Ascending aorta (tissue), 2 donors: ENCODE measurements at regions of chr9 and their contacts with region 1.

Region 1: DNA sequence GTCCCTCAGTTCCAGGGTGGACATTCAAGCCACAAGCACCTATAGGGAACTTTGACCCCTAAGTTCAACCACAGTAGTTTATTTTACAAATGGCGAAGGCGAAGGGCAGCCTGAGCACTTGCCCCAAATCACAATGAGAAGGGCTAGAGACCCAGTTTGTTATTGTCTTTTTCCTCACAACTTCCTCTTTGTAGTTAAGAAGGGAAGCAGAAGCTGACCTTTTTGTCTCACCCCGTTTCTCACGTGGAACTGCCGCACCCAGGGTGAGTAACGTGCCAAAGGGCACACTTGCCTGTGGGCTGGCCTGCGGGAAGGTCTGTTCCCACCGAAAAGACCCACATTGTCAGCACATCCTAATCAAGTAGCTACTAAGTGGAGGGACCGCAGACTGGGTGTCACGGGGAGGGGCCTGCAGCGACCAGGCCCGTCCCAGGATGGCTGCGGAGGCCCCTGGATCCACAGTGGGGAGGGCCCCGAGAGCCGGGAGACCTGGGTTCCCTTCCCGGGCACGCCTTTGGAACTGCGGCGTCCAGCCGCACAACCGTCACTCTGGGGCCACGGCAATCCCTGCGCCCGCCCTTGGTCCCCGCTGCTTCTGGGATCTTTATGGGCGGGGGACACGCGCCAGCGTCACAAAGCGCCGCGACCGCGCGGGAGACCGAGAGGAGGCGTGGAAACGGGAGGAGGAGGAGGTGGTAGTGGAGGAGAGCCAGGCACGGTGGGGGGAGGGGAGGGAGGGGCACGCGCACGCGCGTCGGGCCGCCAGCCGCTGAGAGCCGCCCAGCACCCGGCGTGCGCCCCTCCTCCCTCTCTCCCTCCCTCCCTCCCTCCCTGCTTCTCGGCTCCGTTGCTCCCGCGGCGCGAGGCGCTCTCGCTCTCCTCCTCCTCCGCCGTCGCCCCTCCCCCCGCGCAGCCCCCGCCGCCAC is at the start of gene UBE2R2:
- DNase-seq: peak; percentile 68 to 95
- H3K4me3 ChIP-seq: peak within 1 kb of the TSS; percentile 85 to 95
- H3K27ac ChIP-seq: peak within 1 kb of the TSS; percentile 99 to 100
- H3K4me1 ChIP-seq: peaks cover 0 to 25% of the 10 kb centered on the region in 2 donors
- H3K27me3 ChIP-seq: no peaks in the 10 kb centered on the region
- CTCF ChIP-seq: no peak
- total RNA-seq, gene UBE2R2: 7.2 TPM

Region 2: GRCh38 chr9:33290247-33291030 is 526.2 kb before region 1 on chr9 and contains the start of gene NFX1:
- intact Hi-C with region 1: loop called (anchors 10 kb)
- DNase-seq: peak; percentile 97 to 99
- H3K4me3 ChIP-seq: peak within 1 kb of the TSS; percentile 83 to 95
- H3K27ac ChIP-seq: peak within 1 kb of the TSS; percentile 99
- H3K4me1 ChIP-seq: peaks cover 5 to 26% of the 10 kb centered on the region in 2 donors
- H3K27me3 ChIP-seq: no peaks in the 10 kb centered on the region
- CTCF ChIP-seq: no peak
- total RNA-seq, gene NFX1: 14.2 TPM

Region 3: DNA sequence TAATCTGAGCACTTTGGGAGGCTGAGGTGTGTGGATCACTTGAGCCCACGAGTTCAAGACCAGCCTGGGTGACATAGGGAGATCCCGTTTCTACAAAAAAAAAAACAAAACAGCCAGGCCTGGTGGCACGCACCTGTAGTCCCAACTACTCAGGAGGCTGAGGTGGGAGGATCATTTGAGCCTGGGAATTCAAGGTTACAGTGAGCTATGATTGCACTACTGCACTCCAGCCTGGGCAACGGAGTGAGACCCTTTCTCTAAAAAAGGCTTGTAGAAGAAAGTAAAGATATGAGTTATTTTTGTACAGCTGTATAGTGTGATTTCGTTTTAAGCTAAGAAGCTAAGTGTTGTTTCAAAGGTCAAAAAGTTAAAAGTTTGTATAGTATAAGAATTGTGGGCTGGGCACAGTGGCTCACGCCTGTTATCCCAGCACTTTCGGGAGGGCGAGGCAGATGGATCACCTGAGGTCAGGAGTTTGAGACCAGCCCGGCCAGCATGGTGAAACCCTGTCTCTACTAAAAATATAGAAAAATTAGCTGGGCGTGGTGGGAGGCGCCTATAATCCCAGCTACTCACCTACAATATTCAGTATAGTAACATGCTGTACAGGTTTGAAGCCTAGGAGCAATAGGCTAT is 19.2 kb after region 1 on chr9:
- intact Hi-C with region 1: loop called (anchors 1 kb)
- DNase-seq: no peak
- H3K4me3 ChIP-seq: no peak overlapping the region
- H3K27ac ChIP-seq: peak overlapping the region; percentile 28 to 31
- H3K4me1 ChIP-seq: peaks cover 0 to 19% of the 10 kb centered on the region in 2 donors
- H3K27me3 ChIP-seq: no peaks in the 10 kb centered on the region
- CTCF ChIP-seq: no peak

Region 4: DNA sequence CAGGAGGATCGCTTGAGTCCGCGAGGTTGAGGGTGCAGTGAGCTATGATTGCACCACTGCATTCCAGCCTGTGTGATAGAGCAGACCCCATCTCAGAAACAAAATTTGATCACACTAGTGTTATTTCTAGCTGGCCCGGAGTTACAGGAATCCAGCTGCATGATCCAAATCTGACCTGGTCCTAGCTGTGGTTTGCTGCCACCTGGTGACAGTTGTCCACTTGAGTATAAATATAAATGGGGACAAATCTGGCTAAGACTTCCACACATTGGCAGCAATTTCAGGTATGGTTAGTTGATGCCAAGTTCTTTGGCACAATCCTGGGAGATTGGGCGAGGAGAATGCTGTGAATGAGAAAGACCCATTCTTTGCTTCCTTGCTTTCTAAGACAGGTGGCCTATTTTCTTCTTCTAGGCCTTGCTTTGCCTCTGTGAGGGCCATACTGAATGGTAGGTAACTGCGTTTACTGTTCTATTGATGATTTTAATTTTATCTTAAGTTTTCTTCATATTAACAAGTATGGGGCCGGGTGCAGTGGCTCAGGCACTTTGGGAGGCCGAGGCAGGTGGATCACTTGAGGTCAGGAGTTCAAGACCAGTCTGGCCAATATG is 35.7 kb after region 1 on chr9:
- intact Hi-C with region 1: loop called (anchors 1 kb)
- DNase-seq: peak; percentile 17 to 89
- H3K4me3 ChIP-seq: no peak overlapping the region
- H3K27ac ChIP-seq: peak overlapping the region in 1 of 2 donors; percentile 27
- H3K4me1 ChIP-seq: peaks cover 5 to 17% of the 10 kb centered on the region in 2 donors
- H3K27me3 ChIP-seq: no peaks in the 10 kb centered on the region
- CTCF ChIP-seq: peak; percentile 54 to 81 (median 57)

Region 5: DNA sequence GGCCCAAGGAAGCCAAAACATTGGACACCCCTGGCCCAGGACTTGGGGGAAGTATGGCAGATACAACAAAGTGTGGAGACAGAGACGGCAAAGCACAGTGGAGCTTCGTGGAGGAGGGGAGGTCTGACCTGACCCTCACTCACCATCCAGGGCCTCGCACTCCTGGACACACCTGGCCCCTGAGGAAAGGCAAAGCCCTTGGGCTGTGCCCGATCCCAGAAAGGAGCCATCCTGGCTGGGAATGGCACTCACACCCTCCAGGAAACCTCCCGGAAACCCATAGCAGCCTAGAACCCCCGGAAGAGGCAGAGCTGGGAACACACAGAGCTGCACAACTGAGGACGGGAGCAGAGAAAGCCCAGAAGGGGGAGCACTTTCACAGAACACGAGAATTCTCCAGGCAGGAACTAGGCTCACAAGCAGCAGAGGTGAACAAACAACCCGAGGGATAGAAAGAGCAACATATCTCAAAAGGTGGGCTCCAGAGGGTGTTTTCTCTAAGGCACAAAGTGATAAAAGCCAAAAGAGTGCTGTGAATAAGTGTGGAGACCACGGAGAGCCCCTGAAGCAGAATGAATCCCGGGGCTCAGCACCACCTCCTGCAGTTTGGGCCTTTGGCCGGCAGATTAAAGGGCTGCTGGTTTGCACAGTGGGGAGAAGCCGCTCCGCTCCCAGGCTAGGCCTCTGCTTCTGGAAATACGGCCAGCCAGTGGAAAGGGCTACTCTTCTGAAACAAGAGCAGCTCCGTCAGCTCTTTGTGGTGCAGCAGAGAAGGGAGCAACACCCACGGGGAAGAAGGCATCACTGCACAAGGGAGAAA is 108.6 kb after region 1 on chr9:
- intact Hi-C with region 1: loop called (anchors 5 kb)
- DNase-seq: no peak
- H3K4me3 ChIP-seq: no peak overlapping the region
- H3K27ac ChIP-seq: peak overlapping the region in 1 of 2 donors; percentile 62
- H3K4me1 ChIP-seq: peaks cover 2% of the 10 kb centered on the region in 2 donors
- H3K27me3 ChIP-seq: no peaks in the 10 kb centered on the region
- CTCF ChIP-seq: peak; percentile 33 to 63 (median 51)

Region 6: DNA sequence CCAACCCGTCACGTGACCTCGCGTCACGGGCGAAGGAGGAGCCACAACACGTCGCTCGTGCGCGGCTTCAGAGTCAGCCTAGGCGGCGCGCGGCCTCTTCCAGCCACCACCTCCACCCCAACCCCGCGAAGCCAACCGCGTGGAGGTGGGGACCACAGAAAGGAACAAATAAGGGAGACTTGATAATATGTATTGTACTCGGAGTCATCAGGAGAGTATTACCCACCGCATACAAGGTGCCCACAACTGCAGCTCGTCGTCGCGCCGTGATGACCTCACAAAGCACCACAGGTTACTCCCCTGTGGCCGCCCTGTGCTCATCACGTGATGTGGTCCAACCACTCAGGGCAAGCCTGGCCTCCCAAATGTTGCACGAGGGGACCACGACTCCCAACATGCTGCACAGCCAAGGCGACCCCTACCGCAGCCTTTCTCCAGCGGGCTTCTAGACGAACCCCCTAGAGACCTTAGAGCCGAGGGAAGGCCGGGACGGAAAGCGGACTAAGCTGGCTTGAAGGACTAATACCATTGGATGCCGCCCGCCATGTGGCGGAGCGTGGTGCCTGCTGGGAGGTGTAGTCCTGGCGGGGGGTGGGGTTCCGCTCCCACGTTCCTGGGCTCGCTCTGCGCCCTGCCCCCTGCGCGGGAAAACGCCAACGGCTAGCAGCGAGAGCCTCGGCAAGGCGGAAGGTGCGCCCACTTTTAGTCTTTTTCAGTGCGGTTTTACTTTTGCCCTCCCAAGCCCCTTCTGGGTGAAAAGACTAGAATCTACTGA is 232.5 kb after region 1 on chr9:
- intact Hi-C with region 1: loop called (anchors 10 kb)
- DNase-seq: peak; percentile 94 to 98
- H3K4me3 ChIP-seq: peak overlapping the region; percentile 95 to 98
- H3K27ac ChIP-seq: peak overlapping the region; percentile 85 to 95
- H3K4me1 ChIP-seq: peaks cover 6 to 9% of the 10 kb centered on the region in 2 donors
- H3K27me3 ChIP-seq: no peaks in the 10 kb centered on the region
- CTCF ChIP-seq: no peak

Region 7: DNA sequence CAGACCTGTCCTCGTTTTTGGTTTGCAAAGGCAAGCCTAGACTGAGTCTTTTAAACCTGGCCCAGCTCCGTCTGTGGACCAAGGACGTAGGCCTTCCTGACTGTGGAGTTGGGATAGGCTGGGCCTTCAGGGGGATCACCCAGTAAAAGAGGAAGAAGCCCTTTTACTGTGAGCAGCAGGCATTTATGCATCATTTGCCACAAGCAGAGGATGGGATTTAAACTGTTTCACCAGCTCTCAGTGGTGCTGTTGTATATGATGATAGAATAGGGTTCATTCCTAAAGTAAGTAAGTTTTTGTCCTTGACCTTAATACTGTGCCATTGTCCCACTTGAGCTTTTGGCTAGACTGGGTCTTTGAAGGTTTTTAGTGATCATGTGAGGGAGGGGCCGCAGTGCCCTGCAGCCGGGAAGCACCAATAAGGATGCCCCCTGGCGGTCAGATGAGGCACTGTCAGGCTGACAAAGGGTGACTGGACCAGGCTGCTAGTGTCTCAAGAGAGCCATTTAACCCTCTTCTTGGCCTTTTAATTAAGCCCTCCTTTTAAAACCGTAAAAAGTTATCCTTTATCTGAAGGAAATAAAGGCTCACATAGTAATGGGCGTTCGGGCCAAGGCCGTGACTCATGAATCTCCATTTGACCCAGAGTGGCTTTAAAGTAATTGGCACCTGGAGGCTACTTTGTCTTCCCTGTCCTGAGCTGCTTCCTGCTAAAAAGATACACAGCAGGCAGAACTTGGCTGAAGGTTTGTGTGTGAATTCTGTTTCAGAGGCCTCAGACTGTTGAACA is 436.3 kb after region 1 on chr9:
- intact Hi-C with region 1: loop called (anchors 5 kb)
- DNase-seq: peak in 1 of 2 donors; percentile 71
- H3K4me3 ChIP-seq: no peak overlapping the region
- H3K27ac ChIP-seq: peak overlapping the region; percentile 79 to 81
- H3K4me1 ChIP-seq: peaks cover 16 to 48% of the 10 kb centered on the region in 2 donors
- H3K27me3 ChIP-seq: no peaks in the 10 kb centered on the region
- CTCF ChIP-seq: peak; percentile 59 to 86 (median 77)